ENCODE measurements at regions of chr1 and their contacts with region 1.

Region 1: DNA sequence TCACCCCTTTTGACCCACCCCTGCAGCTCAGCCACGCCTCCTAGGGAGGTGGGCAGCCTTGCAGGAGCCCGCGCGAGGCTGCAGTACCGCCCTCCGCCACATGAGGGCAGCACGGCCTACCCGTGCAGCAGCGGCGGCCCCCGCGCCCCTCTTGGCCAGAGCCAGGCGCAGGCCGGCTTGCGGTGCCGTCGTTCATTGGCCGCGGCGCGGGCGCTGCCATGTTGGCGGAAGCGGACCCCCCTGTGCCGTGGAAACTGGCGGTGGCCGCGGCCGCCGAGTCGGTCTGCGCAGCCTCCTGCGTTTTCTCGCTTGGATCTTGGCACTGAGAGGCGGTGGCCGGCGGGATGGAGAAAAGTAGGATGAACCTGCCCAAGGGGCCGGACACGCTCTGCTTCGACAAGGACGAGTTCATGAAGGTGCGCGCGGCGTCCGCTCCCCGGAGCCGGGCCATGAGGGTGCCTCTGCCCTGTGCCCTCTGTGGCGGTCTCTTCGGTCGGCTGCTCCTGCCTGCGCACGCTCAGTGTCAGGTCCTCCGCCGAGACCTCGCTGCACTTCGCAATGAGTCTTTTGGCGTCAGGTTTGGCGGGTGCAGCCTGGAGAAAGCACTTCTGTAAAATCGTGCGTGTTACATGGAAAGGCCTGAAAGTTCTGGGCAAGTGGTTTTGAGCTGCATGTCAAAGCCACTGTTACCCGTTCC is at the start of gene COG2:
- DNase-seq: peak; percentile 95
- H3K4me3 ChIP-seq: peak within 1 kb of the TSS; percentile 82
- H3K27ac ChIP-seq: peak within 1 kb of the TSS; percentile 41
- H3K4me1 ChIP-seq: peaks cover 18% of the 10 kb centered on the region
- CTCF ChIP-seq: peak; percentile 89
- total RNA-seq, gene COG2: 30.5 and 47.9 TPM in 2 replicates

Region 2: DNA sequence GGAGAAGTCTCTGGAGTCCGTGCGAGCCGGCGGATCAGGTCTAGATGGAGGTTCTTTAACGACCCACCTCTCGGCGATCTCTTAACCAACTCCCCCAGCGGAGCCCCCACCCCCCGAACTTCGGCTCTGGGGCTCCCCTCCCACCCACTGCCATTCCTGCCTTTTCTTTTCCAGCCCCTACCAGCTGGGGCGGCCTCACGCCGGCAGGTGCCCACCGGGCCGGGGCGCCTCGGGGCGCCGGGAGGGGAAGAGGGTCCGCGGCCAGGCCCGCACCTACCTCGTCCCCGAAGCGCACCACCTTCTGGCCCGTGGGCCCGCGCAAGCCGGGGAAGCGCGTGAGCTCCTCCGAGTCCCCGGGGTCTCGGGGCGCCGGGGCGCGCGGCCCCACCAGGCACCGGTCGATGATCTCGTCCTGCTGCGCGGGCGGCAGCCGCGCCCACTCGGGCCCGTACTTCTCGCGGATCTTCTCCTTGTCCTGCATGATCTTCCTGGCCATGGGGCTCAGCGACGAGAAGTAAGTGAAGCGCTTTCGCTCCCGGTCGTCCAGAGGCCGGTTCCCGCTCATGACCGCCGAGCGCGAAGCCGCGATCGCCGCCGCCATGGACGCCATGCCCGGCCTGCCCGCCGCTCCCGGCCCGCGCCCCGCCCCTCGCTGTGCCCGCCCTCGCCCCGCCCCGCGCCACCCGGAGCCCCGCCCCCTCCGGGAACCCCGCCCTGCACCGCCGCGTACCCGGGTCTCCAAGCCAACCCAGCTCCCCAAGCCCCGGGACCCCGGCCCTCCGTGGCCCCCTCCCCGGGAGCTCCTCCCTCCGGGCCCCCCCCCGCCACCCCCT is 225.7 kb after region 1 on chr1 and contains the start of gene C1orf198:
- CTCF ChIA-PET with region 1: no interaction called
- POLR2A ChIA-PET with region 1: no interaction called
- intact Hi-C with region 1: loop called (anchors 5 kb)
- DNase-seq: peak; percentile 59
- H3K4me3 ChIP-seq: peak within 1 kb of the TSS; percentile 84
- H3K27ac ChIP-seq: no peak within 1 kb of the TSS
- H3K4me1 ChIP-seq: peaks cover 16% of the 10 kb centered on the region
- CTCF ChIP-seq: 0 out of 2 replicates have a peak, but pooled peaks have one; percentile 25
- total RNA-seq, gene C1orf198: 4.9 and 5.7 TPM in 2 replicates

Region 3: DNA sequence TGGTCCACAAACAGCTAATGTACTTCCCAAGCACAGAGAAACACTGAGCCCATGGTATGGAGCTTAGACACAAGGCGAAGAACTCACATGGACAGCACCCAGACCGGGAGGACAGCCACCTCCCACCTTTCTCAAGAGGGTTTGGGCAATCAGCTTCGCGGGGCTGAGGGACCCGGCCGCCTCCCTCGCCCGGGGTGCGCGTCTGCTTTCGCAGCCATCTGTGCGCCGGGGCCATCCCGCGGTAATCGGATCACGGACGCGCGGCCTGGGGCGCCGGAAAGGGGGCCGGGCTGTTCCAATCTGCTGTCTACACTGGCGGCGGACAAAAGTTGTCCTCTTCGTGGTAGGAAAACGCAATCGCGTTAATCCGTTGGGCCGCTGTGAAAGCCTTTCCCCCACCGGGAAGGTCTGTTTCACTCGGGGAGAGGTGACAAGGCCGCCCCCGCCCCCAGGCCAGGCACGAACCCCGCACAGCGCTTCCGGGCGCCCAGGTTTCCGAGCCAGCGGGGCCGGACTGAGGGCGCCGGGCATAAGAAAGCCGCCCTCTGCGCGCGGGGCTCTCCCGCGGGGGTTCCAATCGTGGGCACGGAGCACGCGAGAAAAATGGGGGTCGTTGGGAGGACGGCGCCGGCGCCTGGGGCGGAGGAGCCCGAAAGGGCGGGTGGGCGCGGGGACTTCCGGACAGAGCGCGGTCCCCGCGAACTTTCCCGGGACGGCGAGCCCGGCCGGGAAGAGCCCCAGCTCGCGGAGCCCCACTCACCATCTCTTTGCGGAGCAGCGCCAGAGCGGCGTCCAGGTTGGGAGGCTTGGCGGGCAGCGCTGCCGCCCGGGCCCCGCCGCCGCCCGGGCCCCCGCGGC is 397.0 kb after region 1 on chr1:
- CTCF ChIA-PET with region 1: no interaction called
- POLR2A ChIA-PET with region 1: no interaction called
- intact Hi-C with region 1: loop called (anchors 1 kb)
- DNase-seq: peak; percentile 21
- H3K4me3 ChIP-seq: peak overlapping the region; percentile 74
- H3K27ac ChIP-seq: no peak overlapping the region
- H3K4me1 ChIP-seq: peaks cover 4% of the 10 kb centered on the region
- CTCF ChIP-seq: no peak